Right cardiac atrium (tissue), 5 donors: ENCODE measurements at regions of chr4 and their contacts with region 1.

Region 1: GRCh38 chr4:16524911-16525554 is 298.8 kb upstream of the TAPT1 start:
- DNase-seq: peak; percentile 53 to 67 (median 64)
- ATAC-seq: peak; percentile 89 to 96
- H3K4me3 ChIP-seq: no peak overlapping the region
- H3K27ac ChIP-seq: no peak overlapping the region
- H3K4me1 ChIP-seq: no peaks in the 10 kb centered on the region
- H3K27me3 ChIP-seq: no peaks in the 10 kb centered on the region

Region 2: DNA sequence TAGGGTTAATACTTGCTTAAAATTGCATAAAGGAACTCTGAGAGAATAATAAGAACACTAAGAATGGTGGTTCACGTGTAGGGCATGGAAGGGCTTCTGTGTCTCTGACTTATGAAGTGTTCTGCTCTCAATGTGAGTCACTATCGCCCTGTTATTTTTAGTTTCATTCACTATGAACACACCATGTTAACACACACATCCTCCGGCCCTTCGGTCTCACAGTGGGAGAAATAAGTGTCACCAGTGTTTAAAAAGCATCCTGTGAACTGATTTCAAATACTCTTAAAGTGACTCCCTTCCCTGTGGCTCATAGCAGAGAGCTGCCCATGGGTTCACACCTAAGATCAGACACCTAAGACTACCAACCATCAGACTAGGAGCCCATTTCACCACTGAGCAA is 528.3 kb before region 1 on chr4:
- intact Hi-C with region 1: no loop called
- DNase-seq: no peak
- ATAC-seq: peak in 1 of 2 donors; percentile 64
- H3K4me3 ChIP-seq: no peak overlapping the region
- H3K27ac ChIP-seq: no peak overlapping the region
- H3K4me1 ChIP-seq: no peaks in the 10 kb centered on the region
- H3K27me3 ChIP-seq: no peaks in the 10 kb centered on the region

Region 3: DNA sequence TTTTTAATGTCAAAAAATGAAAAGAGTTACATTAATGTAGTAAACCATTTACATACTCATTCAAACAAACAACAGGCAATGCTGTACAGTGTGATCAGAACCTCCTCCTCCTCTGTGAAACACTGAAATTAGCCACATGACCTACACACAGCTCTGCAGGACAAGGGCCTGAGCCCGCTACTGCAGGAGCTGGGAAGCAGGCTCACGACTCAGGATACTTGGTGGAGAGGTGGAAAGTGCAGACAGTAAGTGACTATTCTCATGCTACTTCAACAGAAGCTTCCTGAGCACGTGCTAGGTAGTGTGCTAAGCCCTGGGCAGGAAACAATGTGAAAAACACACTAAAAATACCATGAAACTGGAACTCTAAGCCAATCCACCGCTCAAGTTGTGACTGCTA is 355.5 kb before region 1 on chr4:
- intact Hi-C with region 1: no loop called
- DNase-seq: no peak
- ATAC-seq: no peak
- H3K4me3 ChIP-seq: no peak overlapping the region
- H3K27ac ChIP-seq: no peak overlapping the region
- H3K4me1 ChIP-seq: no peaks in the 10 kb centered on the region
- H3K27me3 ChIP-seq: no peaks in the 10 kb centered on the region

Region 4: DNA sequence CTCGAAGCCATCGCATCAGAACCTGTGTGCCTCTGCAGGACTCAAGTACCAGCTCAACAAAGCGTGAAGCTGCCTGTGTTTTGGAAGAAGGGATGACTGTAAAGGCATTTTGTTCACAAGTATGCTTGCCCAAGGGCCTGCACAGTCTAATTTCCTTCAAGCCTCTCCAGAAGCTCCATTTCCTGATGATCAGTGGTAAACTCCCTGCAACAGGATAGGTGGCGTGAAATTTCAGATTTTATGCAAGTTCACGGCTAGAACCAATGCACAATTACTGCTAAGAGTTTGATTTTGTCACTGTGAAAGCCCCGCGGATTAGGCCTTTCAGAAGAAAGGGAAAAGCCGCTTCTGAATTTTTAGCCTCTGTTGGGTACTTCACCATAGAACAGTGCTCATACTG is 209.6 kb before region 1 on chr4:
- intact Hi-C with region 1: no loop called
- DNase-seq: no peak
- ATAC-seq: no peak
- H3K4me3 ChIP-seq: no peak overlapping the region
- H3K27ac ChIP-seq: no peak overlapping the region
- H3K4me1 ChIP-seq: no peaks in the 10 kb centered on the region
- H3K27me3 ChIP-seq: no peaks in the 10 kb centered on the region

Region 5: DNA sequence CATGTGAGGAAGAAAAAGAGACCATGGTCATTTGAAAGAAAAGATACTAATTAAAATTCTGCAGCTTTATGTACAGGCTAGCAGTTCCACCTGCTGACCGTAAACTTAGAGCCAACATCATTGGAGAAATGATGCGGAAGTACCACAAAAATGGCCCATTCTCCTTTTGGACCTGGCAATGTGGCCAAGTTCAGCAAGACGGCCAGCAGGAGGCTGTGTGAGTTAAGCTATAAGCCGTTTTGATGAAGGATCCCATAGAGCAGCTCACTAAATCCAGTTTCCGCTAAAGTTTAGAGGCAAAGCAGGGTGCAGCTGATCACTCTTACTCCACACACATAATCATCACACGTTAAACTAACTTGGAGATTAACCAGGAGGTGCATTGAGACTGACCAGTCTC is 239.6 kb after region 1 on chr4:
- intact Hi-C with region 1: loop called in 1 of 4 experiments (anchors 10 kb)
- DNase-seq: no peak
- ATAC-seq: peak in 1 of 2 donors; percentile 16
- H3K4me3 ChIP-seq: no peak overlapping the region
- H3K27ac ChIP-seq: no peak overlapping the region
- H3K4me1 ChIP-seq: peaks cover 1% of the 10 kb centered on the region
- H3K27me3 ChIP-seq: no peaks in the 10 kb centered on the region